ENCODE measurements at regions of chr18 and their contacts with region 1.

Region 1: DNA sequence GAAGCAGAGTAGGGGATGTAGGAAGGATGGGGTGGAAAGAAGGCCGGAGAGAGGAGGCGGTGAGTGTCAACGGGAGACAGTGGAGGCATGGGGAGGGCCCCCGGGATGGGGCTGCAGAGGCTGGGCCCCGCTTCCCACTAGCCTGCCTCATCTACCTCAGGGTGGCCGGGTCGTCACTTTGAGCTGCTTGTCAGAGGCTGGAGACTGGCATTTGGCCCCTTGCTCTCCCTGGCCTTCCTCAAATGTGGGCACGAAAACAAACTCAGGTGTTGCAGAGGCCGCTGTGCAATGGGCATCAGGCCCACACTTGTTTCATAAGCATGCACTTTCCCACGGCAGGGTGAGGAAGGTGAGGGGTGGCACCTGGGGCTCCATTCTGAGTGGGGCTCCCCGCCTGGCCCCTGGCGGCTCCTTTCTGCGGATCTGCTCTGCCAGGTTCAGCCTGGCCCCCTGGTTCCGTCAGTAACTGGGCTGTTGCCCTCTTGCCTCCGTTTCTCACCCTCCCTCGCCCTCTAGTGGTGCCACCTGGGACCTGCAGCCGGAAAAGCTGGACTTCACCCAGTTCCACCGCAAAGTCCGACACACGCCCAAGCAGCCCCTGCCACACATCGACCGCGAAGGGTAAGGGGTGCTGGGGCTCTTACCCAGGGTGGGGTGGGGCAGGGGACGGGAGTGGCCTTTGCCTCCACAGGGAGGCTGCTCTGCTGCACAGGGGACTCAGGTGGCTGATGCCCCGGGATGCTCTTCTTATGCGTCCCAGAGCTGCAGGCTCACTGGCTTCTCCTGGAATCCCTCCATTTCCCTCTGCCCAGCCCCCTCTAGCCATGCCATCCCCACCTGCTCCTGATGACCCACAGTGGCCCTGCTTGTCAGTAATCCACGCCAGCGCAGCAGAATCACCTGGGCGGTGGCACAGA is 125.4 kb downstream of the CTIF start:
- DNase-seq: peak; percentile 65 to 87 (median 75)
- H3K4me3 ChIP-seq: no peak overlapping the region
- H3K27ac ChIP-seq: peak overlapping the region in 1 of 5 donors; percentile 22
- H3K4me1 ChIP-seq: peaks cover 6 to 27% of the 10 kb centered on the region in 2 donors
- H3K27me3 ChIP-seq: no peaks in the 10 kb centered on the region
- CTCF ChIP-seq: peak; percentile 84 to 92 (median 87)
- POLR2A ChIP-seq: no peak

Region 2: GRCh38 chr18:48475635-48476549 is 188.3 kb before region 1 on chr18:
- intact Hi-C with region 1: loop called (anchors 2 to 5 kb)
- DNase-seq: peak; percentile 59 to 86 (median 65)
- H3K4me3 ChIP-seq: no peak overlapping the region
- H3K27ac ChIP-seq: no peak overlapping the region
- H3K4me1 ChIP-seq: peaks cover 0 to 7% of the 10 kb centered on the region in 2 donors
- H3K27me3 ChIP-seq: no peaks in the 10 kb centered on the region
- CTCF ChIP-seq: peak; percentile 78 to 92 (median 90)
- POLR2A ChIP-seq: no peak

Region 3: DNA sequence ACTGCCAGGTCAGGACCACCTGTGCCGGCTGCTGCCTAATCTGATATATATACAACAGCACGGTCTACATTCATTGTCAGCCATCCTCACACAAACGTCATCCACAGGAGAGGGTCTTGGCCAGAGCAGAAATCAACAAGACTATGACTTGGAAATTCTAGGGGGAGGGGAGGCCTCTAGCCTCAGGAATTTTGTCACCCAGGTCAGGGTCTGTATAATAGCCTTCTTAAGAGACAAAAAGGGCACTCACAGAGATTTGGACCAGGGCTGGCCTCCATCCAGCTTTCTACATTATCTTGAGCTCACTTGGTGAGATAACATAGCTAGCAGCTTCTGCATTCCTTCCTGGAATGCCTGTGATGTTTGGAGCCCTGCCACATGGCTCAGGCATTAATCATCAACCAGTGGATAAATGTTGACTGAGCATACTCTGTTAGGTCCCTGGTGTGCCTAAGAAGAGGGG is 175.8 kb before region 1 on chr18:
- intact Hi-C with region 1: loop called in 1 of 2 experiments (anchors 5 kb)
- DNase-seq: peak; percentile 66 to 98 (median 95)
- H3K4me3 ChIP-seq: no peak overlapping the region
- H3K27ac ChIP-seq: peak overlapping the region in 1 of 5 donors; percentile 33
- H3K4me1 ChIP-seq: peaks cover 0 to 11% of the 10 kb centered on the region in 2 donors
- H3K27me3 ChIP-seq: no peaks in the 10 kb centered on the region
- CTCF ChIP-seq: no peak
- POLR2A ChIP-seq: no peak

Region 4: DNA sequence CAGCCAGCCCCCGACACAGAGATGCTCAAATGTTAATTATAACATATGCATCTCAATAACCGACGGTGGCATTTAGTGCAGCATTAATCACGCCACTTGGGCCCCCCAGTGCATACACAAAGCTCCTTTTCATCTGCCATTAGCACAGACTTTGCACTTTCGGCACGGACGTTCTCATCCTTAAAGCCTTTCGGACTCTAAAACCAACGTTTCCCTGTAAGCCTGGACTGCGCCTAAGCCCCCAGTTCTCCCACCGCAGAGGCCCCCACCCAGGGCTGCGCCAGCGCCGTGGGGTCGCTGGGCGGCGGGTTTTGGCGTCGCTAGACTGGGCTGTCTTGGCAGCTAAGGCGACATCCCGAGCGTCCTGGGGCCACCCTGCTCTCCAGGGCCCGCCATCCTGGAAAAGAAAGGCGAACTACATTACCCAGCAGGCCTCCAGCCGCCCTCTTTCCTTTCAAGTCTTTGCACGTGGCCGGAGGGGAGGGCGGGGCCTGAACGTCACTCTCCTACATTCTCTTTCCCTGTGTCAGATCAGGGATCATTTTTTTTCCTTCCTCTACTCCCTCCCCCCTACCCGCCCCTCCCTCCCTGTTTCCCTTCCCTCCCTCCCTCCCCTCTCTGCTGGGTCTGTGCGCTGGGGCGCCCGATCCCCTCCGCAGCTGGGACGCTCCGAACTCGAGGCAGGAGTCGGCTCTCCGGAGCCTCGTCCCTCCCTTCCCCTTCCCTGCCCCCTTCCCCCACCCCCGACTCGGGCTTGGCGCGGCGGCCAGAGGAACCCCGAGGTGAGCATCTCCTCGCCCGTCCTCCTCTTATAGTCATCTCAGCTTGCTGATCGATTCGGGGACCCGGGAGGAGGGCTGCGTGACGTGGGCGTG is 125.4 kb before region 1 on chr18 and contains the start of gene CTIF:
- intact Hi-C with region 1: loop called (anchors 10 kb)
- DNase-seq: peak; percentile 96 to 99 (median 98)
- H3K4me3 ChIP-seq: peak within 1 kb of the TSS; percentile 59 to 97 (median 80)
- H3K27ac ChIP-seq: peak within 1 kb of the TSS; percentile 46 to 94 (median 83)
- H3K4me1 ChIP-seq: peaks cover 5 to 46% of the 10 kb centered on the region in 2 donors
- H3K27me3 ChIP-seq: no peaks in the 10 kb centered on the region
- CTCF ChIP-seq: no peak
- POLR2A ChIP-seq: peak; percentile 37 to 80
- total RNA-seq, gene CTIF: 20.5 to 98.7 (median 46.5) TPM